ENCODE measurements at regions of chr4 and their contacts with region 1.

Region 1: DNA sequence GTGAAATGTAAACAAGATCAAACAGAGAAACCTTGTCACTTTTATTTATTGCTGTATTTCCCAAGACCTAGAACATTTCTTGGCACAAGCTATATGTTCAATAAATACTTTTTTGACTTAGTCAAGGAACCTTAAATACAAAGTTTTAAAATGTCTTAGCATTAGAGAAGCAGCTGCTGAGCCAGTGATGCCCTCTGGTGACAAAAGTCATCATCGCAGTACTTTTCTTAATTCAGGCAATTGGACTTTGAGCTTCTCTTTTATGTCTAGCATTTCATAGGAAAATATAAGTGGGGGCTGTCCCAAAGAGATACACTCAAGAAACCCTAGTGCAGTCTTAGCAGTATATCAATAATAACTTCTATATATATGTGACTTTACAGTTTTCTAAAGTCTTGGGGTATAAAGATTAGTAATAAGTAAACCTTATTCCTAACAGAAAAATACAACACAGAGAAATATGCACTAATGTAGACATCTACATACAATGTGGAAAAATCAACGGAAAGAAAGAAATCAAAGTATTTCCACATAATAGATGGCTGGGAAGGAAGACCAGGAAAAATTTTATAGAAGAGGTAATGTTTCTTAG is 118.4 kb downstream of the DTHD1 start:
- DNase-seq: peak; percentile 13 to 78 (median 40)
- ATAC-seq: peak; percentile 70
- H3K4me3 ChIP-seq: no peak overlapping the region
- H3K4me3 Mint-ChIP-seq: no peak overlapping the region
- H3K27ac ChIP-seq: no peak overlapping the region
- H3K27ac Mint-ChIP-seq: no peak overlapping the region
- H3K4me1 ChIP-seq: no peaks in the 10 kb centered on the region
- H3K4me1 Mint-ChIP-seq: peaks cover 9% of the 10 kb centered on the region
- H3K27me3 ChIP-seq: no peaks in the 10 kb centered on the region
- H3K27me3 Mint-ChIP-seq: peaks cover 4% of the 10 kb centered on the region
- CTCF ChIP-seq: peak; percentile 96

Region 2: DNA sequence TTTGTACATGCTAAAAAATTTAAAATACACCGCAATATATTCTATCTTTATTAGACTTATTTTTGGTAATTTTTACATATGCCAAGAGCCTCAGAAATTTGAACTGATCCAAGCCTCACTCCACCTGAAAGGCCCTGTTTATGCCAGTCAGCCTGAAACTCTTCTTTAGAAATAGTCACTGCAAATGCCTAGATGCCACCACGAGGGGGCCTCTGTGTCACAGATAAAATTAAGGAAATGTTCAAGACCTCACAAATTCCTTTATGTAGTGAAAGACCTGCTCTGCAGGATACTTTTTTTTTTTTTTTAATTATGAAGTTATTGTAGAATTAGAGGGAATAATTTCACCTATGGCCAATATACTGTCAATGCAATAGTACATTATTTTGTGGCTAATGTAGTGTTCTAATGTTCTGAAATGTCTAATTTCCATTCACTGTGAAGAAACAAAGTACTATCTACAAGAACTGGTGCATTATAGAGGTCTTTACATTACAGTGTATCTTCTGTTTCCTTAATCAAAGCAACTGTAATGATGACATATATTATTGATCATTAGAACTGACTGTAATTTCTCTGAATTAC is 48.7 kb before region 1 on chr4:
- CTCF ChIA-PET with region 1: interaction called, 57 read pairs
- POLR2A ChIA-PET with region 1: interaction called, 8 read pairs
- intact Hi-C with region 1: loop called (anchors 1 kb)
- DNase-seq: peak; percentile 61 to 86 (median 72)
- ATAC-seq: peak; percentile 94
- H3K4me3 ChIP-seq: no peak overlapping the region
- H3K4me3 Mint-ChIP-seq: no peak overlapping the region
- H3K27ac ChIP-seq: no peak overlapping the region
- H3K27ac Mint-ChIP-seq: no peak overlapping the region
- H3K4me1 ChIP-seq: no peaks in the 10 kb centered on the region
- H3K4me1 Mint-ChIP-seq: no peaks in the 10 kb centered on the region
- H3K27me3 ChIP-seq: no peaks in the 10 kb centered on the region
- H3K27me3 Mint-ChIP-seq: no peaks in the 10 kb centered on the region
- CTCF ChIP-seq: peak; percentile 91

Region 3: DNA sequence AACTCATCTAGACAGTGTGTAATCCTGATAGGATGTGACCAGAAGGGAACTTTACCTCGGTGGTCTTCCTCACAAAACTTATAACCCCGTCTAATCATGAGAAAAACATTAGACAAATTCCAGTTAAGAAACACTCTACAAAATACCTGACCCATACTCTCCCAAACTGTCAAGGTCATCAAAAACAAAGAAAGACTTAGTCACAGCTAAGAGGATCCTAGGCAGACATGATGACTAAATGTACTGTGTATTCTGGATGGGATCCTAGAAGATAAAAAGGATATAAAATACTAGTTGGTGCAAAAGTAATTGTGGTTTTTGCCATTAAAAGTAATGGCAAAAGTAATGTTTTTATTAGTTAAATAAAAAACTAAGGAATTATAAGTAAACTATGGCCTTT is 36.8 kb before region 1 on chr4:
- CTCF ChIA-PET with region 1: interaction called, 17 read pairs
- POLR2A ChIA-PET with region 1: no interaction called
- intact Hi-C with region 1: no loop called
- DNase-seq: no peak
- ATAC-seq: no peak
- H3K4me3 ChIP-seq: no peak overlapping the region
- H3K4me3 Mint-ChIP-seq: no peak overlapping the region
- H3K27ac ChIP-seq: no peak overlapping the region
- H3K27ac Mint-ChIP-seq: no peak overlapping the region
- H3K4me1 ChIP-seq: no peaks in the 10 kb centered on the region
- H3K4me1 Mint-ChIP-seq: no peaks in the 10 kb centered on the region
- H3K27me3 ChIP-seq: no peaks in the 10 kb centered on the region
- H3K27me3 Mint-ChIP-seq: no peaks in the 10 kb centered on the region
- CTCF ChIP-seq: no peak

Region 4: GRCh38 chr4:36385951-36386571 is 13.8 kb before region 1 on chr4:
- CTCF ChIA-PET with region 1: interaction called, 17 read pairs
- POLR2A ChIA-PET with region 1: interaction called, 26 read pairs
- intact Hi-C with region 1: loop called in 1 of 2 experiments (anchors 2 kb)
- DNase-seq: peak in 13 of 14 experiments; percentile 0 to 89 (median 30)
- ATAC-seq: peak; percentile 98
- H3K4me3 ChIP-seq: no peak overlapping the region
- H3K4me3 Mint-ChIP-seq: peak overlapping the region; percentile 36
- H3K27ac ChIP-seq: peak overlapping the region; percentile 39 to 44
- H3K27ac Mint-ChIP-seq: peak overlapping the region; percentile 79
- H3K4me1 ChIP-seq: peaks cover 9% of the 10 kb centered on the region
- H3K4me1 Mint-ChIP-seq: peaks cover 37% of the 10 kb centered on the region
- H3K27me3 ChIP-seq: no peaks in the 10 kb centered on the region
- H3K27me3 Mint-ChIP-seq: no peaks in the 10 kb centered on the region
- CTCF ChIP-seq: no peak

Region 5: GRCh38 chr4:36516522-36517095 is 116.8 kb after region 1 on chr4:
- CTCF ChIA-PET with region 1: no interaction called
- POLR2A ChIA-PET with region 1: no interaction called
- intact Hi-C with region 1: no loop called
- DNase-seq: no peak
- ATAC-seq: no peak
- H3K4me3 ChIP-seq: no peak overlapping the region
- H3K4me3 Mint-ChIP-seq: no peak overlapping the region
- H3K27ac ChIP-seq: no peak overlapping the region
- H3K27ac Mint-ChIP-seq: no peak overlapping the region
- H3K4me1 ChIP-seq: no peaks in the 10 kb centered on the region
- H3K4me1 Mint-ChIP-seq: no peaks in the 10 kb centered on the region
- H3K27me3 ChIP-seq: no peaks in the 10 kb centered on the region
- H3K27me3 Mint-ChIP-seq: peaks cover 9% of the 10 kb centered on the region
- CTCF ChIP-seq: no peak

Region 6: GRCh38 chr4:36556984-36557383 is 157.1 kb after region 1 on chr4:
- CTCF ChIA-PET with region 1: no interaction called
- POLR2A ChIA-PET with region 1: no interaction called
- intact Hi-C with region 1: no loop called
- DNase-seq: no peak
- ATAC-seq: no peak
- H3K4me3 ChIP-seq: no peak overlapping the region
- H3K4me3 Mint-ChIP-seq: no peak overlapping the region
- H3K27ac ChIP-seq: no peak overlapping the region
- H3K27ac Mint-ChIP-seq: no peak overlapping the region
- H3K4me1 ChIP-seq: no peaks in the 10 kb centered on the region
- H3K4me1 Mint-ChIP-seq: peaks cover 2% of the 10 kb centered on the region
- H3K27me3 ChIP-seq: no peaks in the 10 kb centered on the region
- H3K27me3 Mint-ChIP-seq: no peaks in the 10 kb centered on the region
- CTCF ChIP-seq: no peak

Measured in CD4-positive, alpha-beta T cell (primary cell).